Right ventricle myocardium superior (tissue), 1 donor: ENCODE measurements at regions of chr3 and their contacts with region 1.

Region 1: DNA sequence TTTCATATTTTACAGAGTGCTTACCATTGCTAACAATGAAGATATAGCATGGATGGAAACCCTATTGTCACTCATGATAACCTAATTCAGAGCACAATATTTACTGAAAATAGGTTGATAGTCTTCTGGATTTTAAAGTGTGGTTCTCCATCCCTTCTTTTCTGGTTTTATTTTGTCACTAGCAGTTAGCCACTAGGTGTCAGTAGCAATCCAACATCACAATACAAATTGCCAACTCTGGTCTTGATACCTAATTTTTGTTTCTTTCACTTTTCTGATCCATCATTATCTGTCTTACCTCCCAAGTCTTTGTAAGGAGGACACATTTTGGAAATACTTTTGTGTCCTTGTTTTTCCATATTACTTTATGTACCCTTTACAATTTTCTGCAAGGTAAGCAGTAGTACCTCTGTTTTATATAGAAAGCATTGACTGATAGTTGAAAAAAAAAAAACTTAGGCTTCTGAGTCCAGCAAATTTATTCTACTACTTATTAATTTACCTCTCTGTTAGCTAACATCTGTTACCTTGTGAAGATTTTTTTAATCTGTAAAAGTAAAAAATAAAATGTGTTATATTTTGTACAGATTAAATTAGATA is 28.3 kb upstream of the CRYBG3 start:
- DNase-seq: no peak
- ATAC-seq: peak; percentile 68

Region 2: DNA sequence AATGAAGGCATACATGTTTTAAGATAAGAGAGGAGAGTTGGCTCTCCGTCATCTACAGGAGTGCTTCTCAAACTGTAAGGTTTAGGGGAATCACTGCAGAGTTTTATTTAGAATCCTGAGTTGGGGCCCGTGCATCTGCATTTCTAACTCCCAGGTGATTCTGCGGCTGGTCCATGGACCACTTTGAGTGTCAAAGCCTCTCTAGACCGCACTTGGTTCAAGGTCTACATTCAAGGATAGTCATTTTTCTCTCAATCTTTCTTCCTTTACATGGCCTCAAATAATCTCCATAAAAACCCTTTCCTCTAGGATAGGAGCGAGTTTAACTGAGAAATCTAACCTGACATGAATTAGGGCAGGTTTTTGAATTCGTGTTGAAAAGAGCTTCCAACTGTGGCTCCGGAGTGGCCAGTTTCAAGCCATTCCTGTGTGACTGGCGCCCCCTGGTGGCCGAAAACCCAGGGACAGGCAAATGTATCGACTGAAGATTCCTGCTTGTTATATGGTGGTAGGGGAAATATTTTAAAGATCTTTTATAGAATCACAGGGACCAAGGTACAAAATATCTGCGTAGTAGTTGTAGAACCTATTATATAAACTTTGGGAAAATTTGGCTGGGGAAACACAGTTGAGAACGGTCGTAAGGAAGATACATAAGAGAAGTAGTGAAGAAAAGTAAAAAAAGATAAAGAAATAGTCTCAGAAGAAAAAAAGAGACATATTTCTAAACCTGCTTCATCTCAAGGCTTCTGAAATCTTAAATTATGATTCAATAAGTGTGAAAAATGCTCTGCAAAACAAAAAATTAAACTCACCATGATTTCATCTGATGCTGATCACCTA is 229.7 kb after region 1 on chr3:
- intact Hi-C with region 1: loop called (anchors 2 kb)
- DNase-seq: peak; percentile 95
- ATAC-seq: peak; percentile 92